HEK293 (cell line): ENCODE measurements at regions of chr3 and their contacts with region 1.

Region 1: DNA sequence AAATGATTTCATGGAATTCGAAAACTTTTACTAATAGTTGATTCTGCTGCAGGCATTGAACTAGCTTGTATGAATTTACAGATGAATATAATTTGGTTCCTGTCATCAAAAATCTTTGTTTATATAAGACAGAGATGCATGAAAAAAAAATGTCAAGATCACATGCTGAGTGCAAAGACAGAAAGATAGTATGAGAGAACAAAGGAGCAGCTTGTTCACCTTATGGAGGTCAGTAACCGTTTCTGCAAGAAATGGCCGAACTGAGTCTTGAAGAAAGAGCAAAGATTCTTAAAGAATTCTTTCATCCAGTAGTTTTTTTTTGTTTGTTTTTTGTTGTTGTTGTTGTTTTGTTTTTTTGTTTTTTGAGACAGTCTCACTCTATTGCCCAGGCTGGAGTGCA is 450.6 kb downstream of the TUSC7 start:
- H3K4me3 ChIP-seq: no peak overlapping the region
- H3K27ac ChIP-seq: no peak overlapping the region
- H3K4me1 ChIP-seq: no peaks in the 10 kb centered on the region
- CTCF ChIP-seq: no peak

Region 2: GRCh38 chr3:117054556-117054955 is 105.6 kb before region 1 on chr3:
- CTCF ChIA-PET with region 1: interaction called, 10 read pairs
- POLR2A ChIA-PET with region 1: no interaction called
- H3K4me3 ChIP-seq: no peak overlapping the region
- H3K27ac ChIP-seq: no peak overlapping the region
- H3K4me1 ChIP-seq: no peaks in the 10 kb centered on the region
- CTCF ChIP-seq: no peak